Endothelial cell of umbilical vein (primary cell): ENCODE measurements at regions of chr11 and their contacts with region 1.

Region 1: DNA sequence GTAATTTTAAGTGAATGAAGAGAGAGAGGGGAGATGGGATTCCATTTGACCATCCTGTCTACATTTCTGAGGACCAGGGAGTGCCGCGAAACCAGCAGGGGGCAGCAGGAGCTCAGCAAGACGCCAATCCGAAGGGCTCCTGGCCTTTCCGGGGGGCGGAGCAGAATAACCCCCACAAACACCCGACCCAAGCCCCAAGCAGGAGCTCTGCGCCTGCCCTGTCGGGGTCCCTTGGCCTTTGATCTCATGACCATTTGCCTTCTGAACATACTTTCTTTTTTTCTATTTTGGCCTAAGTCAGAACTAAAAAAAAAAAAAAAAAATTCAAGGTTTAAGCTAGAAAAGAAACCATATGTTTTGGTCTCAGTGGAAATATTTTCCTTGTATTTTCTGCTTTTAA is 21.9 kb upstream of the SCN2B start:
- DNase-seq: peak; percentile 61
- H3K4me3 ChIP-seq: no peak overlapping the region
- H3K27ac ChIP-seq: no peak overlapping the region
- H3K4me1 ChIP-seq: no peaks in the 10 kb centered on the region
- H3K27me3 ChIP-seq: peaks cover 0 to 4% of the 10 kb centered on the region in 2 experiments
- CTCF ChIP-seq: peak; percentile 81 to 93
- POLR2A ChIP-seq: no peak

Region 2: DNA sequence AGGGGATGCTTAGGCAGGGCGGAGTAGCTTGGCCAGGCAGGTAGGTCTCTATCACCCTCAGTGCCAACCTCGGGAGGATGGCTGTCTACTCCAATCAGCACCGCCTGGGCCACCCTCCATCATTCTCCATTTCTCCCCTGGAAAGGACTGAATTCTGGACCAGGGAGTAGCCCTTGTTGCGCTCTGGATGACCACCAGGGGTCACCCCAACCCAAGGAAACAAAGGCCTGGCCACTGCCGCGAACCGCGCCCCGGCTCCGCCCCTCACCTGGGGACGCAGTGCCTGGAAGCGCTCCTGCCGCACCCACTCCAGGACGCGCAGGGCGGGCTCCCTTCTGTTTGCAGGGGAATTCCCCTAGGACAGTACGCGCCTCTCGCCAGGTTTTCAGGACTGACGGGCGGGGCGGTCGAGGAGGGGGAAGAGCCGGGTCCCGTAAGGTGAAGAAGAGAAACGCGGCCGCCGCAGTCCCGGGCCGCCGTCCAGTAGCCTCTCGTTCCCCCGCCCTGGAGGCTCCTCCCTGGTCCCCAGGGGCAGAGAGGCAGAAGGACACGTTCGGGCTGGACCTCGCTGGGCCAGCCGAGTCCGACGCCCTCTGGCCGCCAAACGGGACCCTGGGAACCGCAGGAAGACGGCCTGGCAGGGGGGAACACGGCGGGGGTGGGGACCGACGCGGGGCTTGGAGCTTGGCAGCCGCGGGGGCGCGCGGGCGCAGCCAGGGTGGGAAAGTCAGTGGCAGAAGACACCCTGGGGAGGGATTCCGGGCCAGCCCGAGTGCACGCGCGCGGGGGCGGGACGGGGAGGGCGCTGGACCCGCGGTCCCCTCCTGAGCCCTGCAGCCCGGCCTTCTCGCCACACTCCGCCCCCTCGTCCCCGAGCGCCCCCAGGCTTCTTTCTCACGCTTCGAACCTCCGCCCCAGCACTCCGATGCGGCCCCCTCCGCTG is 52.8 kb before region 1 on chr11:
- CTCF ChIA-PET with region 1: interaction called, 9 read pairs
- POLR2A ChIA-PET with region 1: no interaction called
- dilution Hi-C with region 1: no loop called
- intact Hi-C with region 1: loop called (anchors 1 kb)
- DNase-seq: peak; percentile 59
- H3K4me3 ChIP-seq: peak overlapping the region; percentile 19 to 44 (median 43)
- H3K27ac ChIP-seq: no peak overlapping the region
- H3K4me1 ChIP-seq: no peaks in the 10 kb centered on the region
- H3K27me3 ChIP-seq: peaks cover 40 to 47% of the 10 kb centered on the region in 2 experiments
- CTCF ChIP-seq: peak; percentile 86 to 90
- POLR2A ChIP-seq: no peak

Region 3: GRCh38 chr11:118216621-118217481 is 18.5 kb after region 1 on chr11:
- CTCF ChIA-PET with region 1: interaction called, 41 read pairs
- POLR2A ChIA-PET with region 1: interaction called, 6 read pairs
- dilution Hi-C with region 1: no loop called
- intact Hi-C with region 1: no loop called
- DNase-seq: peak; percentile 32
- H3K4me3 ChIP-seq: no peak overlapping the region
- H3K27ac ChIP-seq: no peak overlapping the region
- H3K4me1 ChIP-seq: no peaks in the 10 kb centered on the region
- H3K27me3 ChIP-seq: peaks cover 23 to 30% of the 10 kb centered on the region in 2 experiments
- CTCF ChIP-seq: no peak
- POLR2A ChIP-seq: no peak

Region 4: DNA sequence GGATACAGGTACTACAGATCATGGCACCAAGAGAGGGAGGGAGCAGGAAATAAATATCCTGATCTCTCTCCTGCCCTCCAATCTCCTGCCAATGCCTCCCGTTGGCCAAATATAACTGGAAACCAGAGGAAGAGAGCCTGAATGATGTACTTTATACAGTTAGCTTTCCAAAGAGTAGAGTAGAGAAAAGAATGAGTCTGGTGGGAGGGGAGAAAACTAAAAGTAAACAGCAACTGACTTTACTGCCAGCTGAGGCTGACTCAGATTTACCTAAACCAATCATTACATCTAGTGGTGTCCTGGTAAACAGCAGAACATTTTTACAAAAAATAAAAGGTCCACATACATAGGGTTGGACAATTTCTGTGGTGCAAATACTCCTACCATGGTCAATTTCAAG is 48.7 kb after region 1 on chr11:
- CTCF ChIA-PET with region 1: interaction called, 23 read pairs
- POLR2A ChIA-PET with region 1: no interaction called
- dilution Hi-C with region 1: no loop called
- intact Hi-C with region 1: no loop called
- DNase-seq: peak; percentile 64
- H3K4me3 ChIP-seq: no peak overlapping the region
- H3K27ac ChIP-seq: peak overlapping the region; percentile 22
- H3K4me1 ChIP-seq: peaks cover 27% of the 10 kb centered on the region
- H3K27me3 ChIP-seq: no peaks in the 10 kb centered on the region
- CTCF ChIP-seq: no peak
- POLR2A ChIP-seq: no peak

Region 5: GRCh38 chr11:118277306-118277705 is 78.9 kb after region 1 on chr11:
- CTCF ChIA-PET with region 1: interaction called, 235 read pairs
- POLR2A ChIA-PET with region 1: no interaction called
- dilution Hi-C with region 1: no loop called
- intact Hi-C with region 1: no loop called
- DNase-seq: peak; percentile 83
- H3K4me3 ChIP-seq: no peak overlapping the region
- H3K27ac ChIP-seq: peak overlapping the region; percentile 72
- H3K4me1 ChIP-seq: peaks cover 42% of the 10 kb centered on the region
- H3K27me3 ChIP-seq: no peaks in the 10 kb centered on the region
- CTCF ChIP-seq: no peak
- POLR2A ChIP-seq: no peak

Region 6: GRCh38 chr11:118304568-118305248 is 106.3 kb after region 1 on chr11 and contains the start of gene CD3E:
- CTCF ChIA-PET with region 1: interaction called, 41 read pairs
- POLR2A ChIA-PET with region 1: no interaction called
- dilution Hi-C with region 1: no loop called
- intact Hi-C with region 1: no loop called
- DNase-seq: no peak
- H3K4me3 ChIP-seq: no peak within 1 kb of the TSS
- H3K27ac ChIP-seq: no peak within 1 kb of the TSS
- H3K4me1 ChIP-seq: no peaks in the 10 kb centered on the region
- H3K27me3 ChIP-seq: peaks cover 10 to 19% of the 10 kb centered on the region in 2 experiments
- CTCF ChIP-seq: no peak
- POLR2A ChIP-seq: no peak
- total RNA-seq, gene CD3E: not detected in 2 replicates

Region 7: GRCh38 chr11:118359295-118359958 is 161.1 kb after region 1 on chr11 and contains the start of gene UBE4A:
- CTCF ChIA-PET with region 1: interaction called, 83 read pairs
- POLR2A ChIA-PET with region 1: no interaction called
- dilution Hi-C with region 1: no loop called
- intact Hi-C with region 1: no loop called
- DNase-seq: peak; percentile 84
- H3K4me3 ChIP-seq: peak within 1 kb of the TSS; percentile 20 to 71 (median 48)
- H3K27ac ChIP-seq: no peak within 1 kb of the TSS
- H3K4me1 ChIP-seq: peaks cover 6% of the 10 kb centered on the region
- H3K27me3 ChIP-seq: no peaks in the 10 kb centered on the region
- CTCF ChIP-seq: no peak
- POLR2A ChIP-seq: peak; percentile 97
- total RNA-seq, gene UBE4A: 34.9 and 40.2 TPM in 2 replicates